CD4-positive, alpha-beta T cell (primary cell): ENCODE measurements at regions of chr2 and their contacts with region 1.

Region 1: DNA sequence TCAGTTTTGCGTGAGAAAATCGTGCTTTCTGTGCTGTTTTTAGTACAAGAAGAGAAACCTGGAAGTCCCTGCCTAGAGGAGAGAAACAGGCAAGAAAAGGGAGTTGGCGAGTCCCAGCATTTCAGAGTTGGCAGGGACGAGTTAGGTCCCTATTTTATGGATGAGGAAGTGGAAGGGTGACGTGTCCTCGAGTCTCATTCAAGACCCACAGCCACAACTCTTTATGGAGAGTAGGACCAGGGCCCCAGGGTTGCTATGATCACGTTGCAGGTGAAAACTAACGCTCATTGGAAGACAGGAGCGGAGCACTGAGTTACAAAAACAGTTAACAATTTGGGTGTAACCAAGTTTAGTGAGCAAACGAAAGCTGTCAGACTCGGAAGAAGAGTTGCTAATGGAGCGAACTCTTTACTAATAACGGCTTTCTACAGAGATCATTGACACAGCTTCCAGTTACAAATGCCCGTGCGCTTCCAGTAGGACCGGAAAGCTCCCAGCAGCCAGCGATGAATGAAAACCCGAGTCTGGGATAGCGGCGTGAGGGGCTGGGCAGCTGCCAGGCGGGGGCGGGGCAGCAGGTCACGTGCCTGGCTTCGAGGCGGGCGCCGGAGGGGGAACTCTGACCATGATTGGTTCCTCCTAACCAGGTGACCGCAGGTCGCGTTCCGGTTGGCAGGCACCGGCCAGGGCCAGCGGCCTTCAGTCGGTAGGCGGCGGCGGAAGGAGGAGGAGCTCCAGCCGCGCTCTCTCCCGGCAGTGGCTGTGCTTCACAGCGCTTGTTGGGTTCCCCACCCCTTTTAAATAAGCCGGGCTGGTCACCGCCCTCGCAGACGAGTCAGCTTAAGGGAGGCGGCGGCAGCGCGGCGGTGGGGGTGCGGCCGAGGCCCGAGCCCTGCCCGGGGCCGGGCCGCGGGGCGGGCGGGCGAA is at the start of gene CCNYL1:
- DNase-seq: peak; percentile 95 to 99 (median 97)
- ATAC-seq: peak; percentile 97
- H3K4me3 ChIP-seq: peak within 1 kb of the TSS; percentile 98
- H3K4me3 Mint-ChIP-seq: peak within 1 kb of the TSS; percentile 95
- H3K27ac ChIP-seq: peak within 1 kb of the TSS; percentile 49 to 75
- H3K27ac Mint-ChIP-seq: peak within 1 kb of the TSS; percentile 82
- H3K4me1 ChIP-seq: peaks cover 23% of the 10 kb centered on the region
- H3K4me1 Mint-ChIP-seq: peaks cover 23% of the 10 kb centered on the region
- H3K27me3 ChIP-seq: no peaks in the 10 kb centered on the region
- H3K27me3 Mint-ChIP-seq: no peaks in the 10 kb centered on the region
- CTCF ChIP-seq: no peak
- total RNA-seq, gene CCNYL1: 8.7 to 11.1 TPM

Region 2: DNA sequence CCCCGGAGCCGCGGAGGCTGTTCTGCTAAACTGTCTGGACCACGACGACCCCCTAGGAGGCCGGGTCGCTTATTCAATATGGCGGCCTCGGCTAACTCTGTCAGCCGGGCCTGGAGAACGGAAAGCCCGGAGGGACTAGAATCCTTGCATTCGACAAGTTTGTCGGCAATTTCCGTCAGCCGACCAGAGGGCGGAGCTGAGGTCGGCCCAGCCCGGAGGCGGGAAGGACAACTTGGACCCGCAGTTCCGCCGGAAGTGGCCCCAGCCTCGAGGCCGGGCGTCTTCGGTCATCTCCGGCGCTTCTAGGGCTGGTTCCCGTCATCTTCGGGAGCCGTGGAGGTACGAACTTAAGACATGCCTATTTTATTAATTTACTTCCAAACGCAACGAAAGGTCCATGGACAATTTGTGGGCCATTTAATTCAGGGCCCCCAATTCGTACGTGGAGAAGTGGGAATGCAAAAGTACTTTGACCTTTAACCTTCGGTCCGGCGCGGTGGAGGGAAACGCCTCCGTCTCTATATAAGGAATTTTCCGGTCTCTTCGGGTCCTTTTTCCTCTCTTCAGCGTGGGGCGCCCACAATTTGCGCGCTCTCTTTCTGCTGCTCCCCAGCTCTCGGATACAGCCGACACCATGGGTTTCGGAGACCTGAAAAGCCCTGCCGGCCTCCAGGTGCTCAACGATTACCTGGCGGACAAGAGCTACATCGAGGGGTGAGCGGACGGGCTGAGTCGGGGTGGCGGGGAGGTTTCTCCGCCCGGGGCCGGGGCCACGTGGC is 1551.5 kb before region 1 on chr2 and contains the starts of genes EEF1B2 and NDUFS1:
- CTCF ChIA-PET with region 1: no interaction called
- POLR2A ChIA-PET with region 1: no interaction called
- intact Hi-C with region 1: loop called in 1 of 2 experiments (anchors 10 kb)
- DNase-seq: peak; percentile 91 to 99 (median 95)
- ATAC-seq: peak; percentile 82
- H3K4me3 ChIP-seq: peak within 1 kb of the TSS; percentile 82
- H3K4me3 Mint-ChIP-seq: peak within 1 kb of the TSS; percentile 99
- H3K27ac ChIP-seq: peak within 1 kb of the TSS; percentile 85 to 92
- H3K27ac Mint-ChIP-seq: peak within 1 kb of the TSS; percentile 97
- H3K4me1 ChIP-seq: peaks cover 39% of the 10 kb centered on the region
- H3K4me1 Mint-ChIP-seq: peaks cover 71% of the 10 kb centered on the region
- H3K27me3 ChIP-seq: no peaks in the 10 kb centered on the region
- H3K27me3 Mint-ChIP-seq: no peaks in the 10 kb centered on the region
- CTCF ChIP-seq: no peak
- total RNA-seq, gene EEF1B2: 1,109 to 1,132 TPM
- total RNA-seq, gene NDUFS1: 33.4 to 34.3 TPM

Region 3: DNA sequence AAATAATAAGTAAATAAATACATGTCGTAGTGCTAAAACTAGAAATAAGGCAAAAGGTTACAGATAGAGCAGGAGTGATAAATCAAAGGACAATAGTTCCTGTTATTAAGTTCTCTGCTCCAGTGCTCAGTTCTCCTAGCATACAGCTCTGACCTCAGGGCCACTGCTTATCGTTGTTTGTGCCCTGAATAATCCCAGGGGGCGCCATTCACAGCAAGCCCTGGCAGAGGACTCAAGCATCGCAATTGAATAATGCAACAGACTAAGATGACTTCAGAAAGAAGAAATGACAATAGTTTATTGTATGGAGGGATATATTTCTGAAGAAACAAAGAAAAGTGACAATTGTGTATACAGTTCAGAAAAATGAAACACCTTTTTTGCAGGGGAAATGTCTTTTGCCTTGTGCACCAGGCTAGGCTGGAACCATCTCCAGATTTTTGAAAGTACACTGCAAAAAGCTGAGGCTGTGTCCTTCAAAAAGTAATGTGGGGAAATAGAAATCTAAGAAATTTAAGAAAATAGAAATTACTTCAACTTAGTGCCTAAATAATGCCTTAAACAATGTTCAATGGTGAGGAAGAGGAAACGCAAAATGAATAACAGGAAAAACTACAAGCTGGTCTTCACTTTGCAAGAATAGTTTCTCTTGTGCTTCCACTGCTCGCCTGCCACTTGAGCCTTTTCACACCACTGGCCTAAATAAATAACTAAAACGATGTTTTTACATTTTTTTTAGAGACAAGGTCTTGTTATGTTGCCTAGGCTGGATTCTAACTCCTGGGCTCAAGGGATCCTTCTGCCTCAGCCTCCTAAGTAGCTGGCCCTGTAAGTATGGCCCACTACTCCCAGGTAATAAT is 18.6 kb before region 1 on chr2:
- CTCF ChIA-PET with region 1: interaction called, 16 read pairs
- POLR2A ChIA-PET with region 1: no interaction called
- intact Hi-C with region 1: no loop called
- DNase-seq: peak; percentile 16 to 73 (median 37)
- ATAC-seq: peak; percentile 60
- H3K4me3 ChIP-seq: no peak overlapping the region
- H3K4me3 Mint-ChIP-seq: no peak overlapping the region
- H3K27ac ChIP-seq: no peak overlapping the region
- H3K27ac Mint-ChIP-seq: no peak overlapping the region
- H3K4me1 ChIP-seq: no peaks in the 10 kb centered on the region
- H3K4me1 Mint-ChIP-seq: peaks cover 5% of the 10 kb centered on the region
- H3K27me3 ChIP-seq: no peaks in the 10 kb centered on the region
- H3K27me3 Mint-ChIP-seq: no peaks in the 10 kb centered on the region
- CTCF ChIP-seq: peak; percentile 73

Region 4: DNA sequence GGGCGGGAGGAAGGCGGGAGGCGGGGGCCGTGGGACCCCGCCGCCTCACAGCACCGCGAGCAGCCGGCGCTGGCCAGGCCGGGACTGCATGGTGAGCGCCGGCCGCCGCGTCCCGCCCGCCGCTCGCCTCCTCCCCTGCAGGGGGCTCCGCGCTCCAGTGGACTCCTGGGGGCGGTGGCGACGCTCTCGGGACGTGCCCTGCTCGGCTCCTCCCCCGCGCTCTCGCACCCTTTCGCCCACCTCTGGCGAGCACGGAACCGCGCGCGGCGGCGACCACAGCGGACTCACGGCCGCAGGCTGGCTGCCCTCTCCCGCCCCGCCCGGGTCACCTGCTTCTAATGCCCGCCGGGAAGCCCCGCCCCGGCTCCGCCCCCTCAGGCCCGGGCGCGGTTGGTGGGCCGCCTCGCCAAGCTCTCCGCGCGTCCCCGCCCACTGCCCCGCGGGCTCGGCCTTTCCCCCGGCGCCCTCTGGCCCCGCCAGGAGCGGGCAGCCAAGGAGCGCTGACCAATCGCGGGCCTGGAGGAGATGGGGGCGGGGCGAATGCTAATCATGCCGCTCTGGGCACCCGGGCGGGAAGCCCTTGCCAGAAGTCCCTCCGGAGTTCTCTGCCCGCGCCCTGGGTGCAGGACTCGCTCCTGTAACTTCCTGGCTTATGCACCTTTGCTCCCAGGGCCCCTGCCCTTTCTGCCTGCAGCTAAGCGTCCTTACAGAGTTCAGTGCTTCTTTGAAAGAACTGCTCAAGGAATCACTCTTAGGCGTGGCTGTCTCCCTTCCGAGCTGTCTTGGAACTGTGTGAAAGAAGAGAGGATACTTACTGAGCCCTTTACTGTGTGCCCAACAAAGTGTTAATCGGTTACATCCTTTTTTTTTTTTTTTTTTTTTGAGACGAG is 58.8 kb after region 1 on chr2 and contains the start of gene FZD5:
- CTCF ChIA-PET with region 1: no interaction called
- POLR2A ChIA-PET with region 1: interaction called, 8 read pairs
- intact Hi-C with region 1: loop called in 1 of 2 experiments (anchors 5 kb)
- DNase-seq: peak; percentile 26 to 91 (median 58)
- ATAC-seq: peak; percentile 64
- H3K4me3 ChIP-seq: peak within 1 kb of the TSS; percentile 73
- H3K4me3 Mint-ChIP-seq: peak within 1 kb of the TSS; percentile 97
- H3K27ac ChIP-seq: no peak within 1 kb of the TSS
- H3K27ac Mint-ChIP-seq: peak within 1 kb of the TSS; percentile 39
- H3K4me1 ChIP-seq: peaks cover 40% of the 10 kb centered on the region
- H3K4me1 Mint-ChIP-seq: peaks cover 34% of the 10 kb centered on the region
- H3K27me3 ChIP-seq: peaks cover 15 to 20% of the 10 kb centered on the region in 2 experiments
- H3K27me3 Mint-ChIP-seq: peaks cover 48% of the 10 kb centered on the region
- CTCF ChIP-seq: peak; percentile 15
- total RNA-seq, gene FZD5: 0.19 to 0.25 TPM

Region 5: DNA sequence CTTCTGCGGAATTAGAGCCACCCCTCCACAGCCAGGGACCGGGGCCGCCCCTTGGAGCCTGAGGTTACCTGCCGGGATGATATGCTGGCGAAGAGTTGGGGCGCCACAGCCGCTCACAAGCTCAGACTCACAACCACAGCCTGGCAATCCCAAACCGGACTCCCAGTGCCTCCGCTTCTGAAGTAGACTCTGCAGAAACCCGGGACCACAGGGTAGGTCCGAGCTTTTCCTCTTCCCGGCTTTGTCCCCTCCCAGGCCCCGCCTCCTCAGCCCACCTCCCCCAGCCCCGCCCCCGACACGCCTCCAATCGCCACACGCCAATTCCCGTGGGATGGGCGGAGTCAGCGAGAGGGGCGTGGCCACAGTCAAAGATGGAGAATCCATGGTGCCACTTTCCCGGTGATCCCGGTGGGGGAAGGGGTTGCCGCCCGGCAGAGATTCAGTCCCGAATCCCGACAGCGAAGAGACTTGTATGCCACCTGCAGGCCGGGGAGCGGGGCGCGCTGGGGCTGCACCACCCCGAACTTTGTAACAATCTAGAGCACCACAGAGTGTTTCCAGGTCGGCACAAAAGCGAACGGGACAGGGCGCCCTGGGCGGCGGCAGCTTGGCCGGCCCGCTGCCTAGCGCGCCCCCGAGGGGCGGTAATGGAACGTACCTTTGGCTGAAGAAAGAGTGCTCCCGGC is 543.9 kb after region 1 on chr2 and contains the start of gene IDH1:
- CTCF ChIA-PET with region 1: interaction called, 4 read pairs
- POLR2A ChIA-PET with region 1: no interaction called
- intact Hi-C with region 1: loop called in 1 of 2 experiments (anchors 10 kb)
- DNase-seq: peak; percentile 87 to 98 (median 92)
- ATAC-seq: peak; percentile 80
- H3K4me3 ChIP-seq: peak within 1 kb of the TSS; percentile 86
- H3K4me3 Mint-ChIP-seq: peak within 1 kb of the TSS; percentile 100
- H3K27ac ChIP-seq: peak within 1 kb of the TSS; percentile 37 to 53
- H3K27ac Mint-ChIP-seq: peak within 1 kb of the TSS; percentile 74
- H3K4me1 ChIP-seq: peaks cover 20% of the 10 kb centered on the region
- H3K4me1 Mint-ChIP-seq: peaks cover 25% of the 10 kb centered on the region
- H3K27me3 ChIP-seq: no peaks in the 10 kb centered on the region
- H3K27me3 Mint-ChIP-seq: no peaks in the 10 kb centered on the region
- CTCF ChIP-seq: no peak
- total RNA-seq, gene IDH1: 3.0 to 3.4 TPM